CD4-positive, alpha-beta T cell (primary cell): ENCODE measurements at regions of chr15 and their contacts with region 1.

Region 1: GRCh38 chr15:70119911-70120508 is 22.3 kb upstream of the TLE3 start:
- DNase-seq: no peak
- ATAC-seq: no peak
- H3K4me3 ChIP-seq: no peak overlapping the region
- H3K4me3 Mint-ChIP-seq: no peak overlapping the region
- H3K27ac ChIP-seq: no peak overlapping the region
- H3K27ac Mint-ChIP-seq: no peak overlapping the region
- H3K4me1 ChIP-seq: no peaks in the 10 kb centered on the region
- H3K4me1 Mint-ChIP-seq: no peaks in the 10 kb centered on the region
- H3K27me3 ChIP-seq: peaks cover 0 to 3% of the 10 kb centered on the region in 2 experiments
- H3K27me3 Mint-ChIP-seq: no peaks in the 10 kb centered on the region
- CTCF ChIP-seq: no peak

Region 2: GRCh38 chr15:69475769-69476358 is 644.1 kb before region 1 on chr15:
- CTCF ChIA-PET with region 1: no interaction called
- POLR2A ChIA-PET with region 1: no interaction called
- intact Hi-C with region 1: no loop called
- DNase-seq: peak; percentile 55 to 85 (median 70)
- ATAC-seq: peak; percentile 95
- H3K4me3 ChIP-seq: no peak overlapping the region
- H3K4me3 Mint-ChIP-seq: no peak overlapping the region
- H3K27ac ChIP-seq: no peak overlapping the region
- H3K27ac Mint-ChIP-seq: no peak overlapping the region
- H3K4me1 ChIP-seq: peaks cover 10% of the 10 kb centered on the region
- H3K4me1 Mint-ChIP-seq: peaks cover 3% of the 10 kb centered on the region
- H3K27me3 ChIP-seq: peaks cover 0 to 2% of the 10 kb centered on the region in 2 experiments
- H3K27me3 Mint-ChIP-seq: no peaks in the 10 kb centered on the region
- CTCF ChIP-seq: peak; percentile 97

Region 3: GRCh38 chr15:70170901-70171886 is 51.2 kb after region 1 on chr15:
- CTCF ChIA-PET with region 1: no interaction called
- POLR2A ChIA-PET with region 1: no interaction called
- intact Hi-C with region 1: loop called in 1 of 2 experiments (anchors 5 kb)
- DNase-seq: no peak
- ATAC-seq: no peak
- H3K4me3 ChIP-seq: no peak overlapping the region
- H3K4me3 Mint-ChIP-seq: no peak overlapping the region
- H3K27ac ChIP-seq: no peak overlapping the region
- H3K27ac Mint-ChIP-seq: no peak overlapping the region
- H3K4me1 ChIP-seq: no peaks in the 10 kb centered on the region
- H3K4me1 Mint-ChIP-seq: no peaks in the 10 kb centered on the region
- H3K27me3 ChIP-seq: no peaks in the 10 kb centered on the region
- H3K27me3 Mint-ChIP-seq: no peaks in the 10 kb centered on the region
- CTCF ChIP-seq: no peak